Activated T-helper 1 cell treated with anti-CD3 and anti-CD28 coated beads, Interleukin-12 subunit alpha, Interleukin-12 subunit beta, Interleukin-2, Interleukin-4 antibody, amounts not matched to agents 30 ng/mL and 10 ng/mL and 1 ng/mL, durations not matched to agents 14 hours and 24 hours and 36 hours (primary cell): ENCODE measurements at regions of chr3 and their contacts with region 1.

Region 1: GRCh38 chr3:187963677-187964385 is 190.1 kb upstream of the LPP start:
- DNase-seq: no peak
- H3K4me3 Mint-ChIP-seq: no peak overlapping the region
- H3K27ac Mint-ChIP-seq: peak overlapping the region; percentile 37
- H3K4me1 Mint-ChIP-seq: peaks cover 15% of the 10 kb centered on the region
- H3K27me3 Mint-ChIP-seq: peaks cover 18% of the 10 kb centered on the region

Region 2: GRCh38 chr3:187714404-187714979 is 249.3 kb before region 1 on chr3:
- intact Hi-C with region 1: no loop called
- DNase-seq: peak; percentile 59
- H3K4me3 Mint-ChIP-seq: no peak overlapping the region
- H3K27ac Mint-ChIP-seq: no peak overlapping the region
- H3K4me1 Mint-ChIP-seq: peaks cover 6% of the 10 kb centered on the region
- H3K27me3 Mint-ChIP-seq: peaks cover 5% of the 10 kb centered on the region

Region 3: GRCh38 chr3:187929112-187929816 is 34.6 kb before region 1 on chr3:
- intact Hi-C with region 1: loop called (anchors 2 kb)
- DNase-seq: no peak
- H3K4me3 Mint-ChIP-seq: peak overlapping the region; percentile 11
- H3K27ac Mint-ChIP-seq: peak overlapping the region; percentile 88
- H3K4me1 Mint-ChIP-seq: peaks cover 45% of the 10 kb centered on the region
- H3K27me3 Mint-ChIP-seq: no peaks in the 10 kb centered on the region

Region 4: GRCh38 chr3:188309437-188310269 is 345.8 kb after region 1 on chr3:
- intact Hi-C with region 1: no loop called
- DNase-seq: no peak
- H3K4me3 Mint-ChIP-seq: peak overlapping the region; percentile 40
- H3K27ac Mint-ChIP-seq: peak overlapping the region; percentile 64
- H3K4me1 Mint-ChIP-seq: peaks cover 35% of the 10 kb centered on the region
- H3K27me3 Mint-ChIP-seq: peaks cover 9% of the 10 kb centered on the region